HCT116 (cell line): ENCODE measurements at regions of chrX and their contacts with region 1.

Region 1: DNA sequence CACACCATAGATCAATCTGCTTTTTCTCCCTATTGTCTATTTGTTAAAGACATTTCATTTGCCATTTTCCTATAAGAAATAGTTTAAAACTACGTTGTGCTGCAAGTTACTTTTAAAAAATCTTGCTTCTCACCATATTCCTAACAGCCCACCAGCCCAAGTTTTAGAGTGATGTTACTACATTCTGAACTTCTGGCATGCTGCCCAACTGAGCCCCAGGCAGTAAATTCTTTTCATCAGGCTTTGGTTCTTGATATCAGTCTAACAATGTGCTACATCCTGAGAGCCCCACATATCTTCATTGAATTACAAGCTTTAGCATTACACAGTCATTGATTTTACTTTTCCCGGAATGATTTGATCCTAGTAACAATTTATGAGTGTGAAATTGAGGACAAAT is 283.8 kb upstream of the IL1RAPL1 start:
- DNase-seq: no peak
- ATAC-seq: no peak
- H3K4me3 ChIP-seq: no peak overlapping the region
- H3K27ac ChIP-seq: no peak overlapping the region
- H3K4me1 ChIP-seq: no peaks in the 10 kb centered on the region
- H3K27me3 ChIP-seq: no peaks in the 10 kb centered on the region
- CTCF ChIP-seq: no peak
- POLR2A ChIP-seq: no peak
- RAD21 ChIP-seq: no peak

Region 2: DNA sequence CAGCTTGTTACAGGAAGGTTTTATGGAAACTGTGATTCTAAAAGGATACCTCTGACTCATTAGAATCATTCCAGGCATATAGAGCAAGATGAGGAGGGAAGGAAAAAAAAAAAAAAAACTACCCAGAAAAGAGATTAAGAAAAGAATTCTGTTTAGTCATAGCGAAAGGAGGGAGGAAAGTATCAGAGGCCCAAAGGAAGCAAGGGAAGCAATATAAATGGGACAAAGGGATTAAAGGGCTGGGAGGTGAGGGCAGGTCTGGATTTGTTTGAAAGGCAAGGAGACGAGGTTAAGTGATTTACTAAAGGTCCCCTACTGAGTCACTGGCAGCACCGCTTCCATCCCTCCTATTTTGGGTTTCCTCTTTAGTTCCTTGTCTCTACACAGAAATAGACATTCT is 195.2 kb after region 1 on chrX:
- CTCF ChIA-PET with region 1: no interaction called
- POLR2A ChIA-PET with region 1: no interaction called
- RAD21 ChIA-PET with region 1: no interaction called
- intact Hi-C with region 1: loop called (anchors 5 kb)
- DNase-seq: peak; percentile 85
- ATAC-seq: peak; percentile 77
- H3K4me3 ChIP-seq: peak overlapping the region in 1 of 2 experiments; percentile 6; a peak in 1 of 4 replicates
- H3K27ac ChIP-seq: peak overlapping the region; percentile 96
- H3K4me1 ChIP-seq: peaks cover 61 to 82% of the 10 kb centered on the region in 2 experiments
- H3K27me3 ChIP-seq: no peaks in the 10 kb centered on the region
- CTCF ChIP-seq: no peak
- POLR2A ChIP-seq: no peak
- RAD21 ChIP-seq: no peak